ENCODE measurements at regions of chr7 and their contacts with region 1.

Region 1: GRCh38 chr7:32694182-32694581 is 197.4 kb downstream of the KBTBD2 start:
- DNase-seq: no peak
- ATAC-seq: no peak
- H3K4me3 ChIP-seq: no peak overlapping the region
- H3K27ac ChIP-seq: no peak overlapping the region
- H3K4me1 ChIP-seq: 0 out of 2 replicates have a peak, but pooled peaks cover 3% of the 10 kb centered on the region
- H3K27me3 ChIP-seq: no peaks in the 10 kb centered on the region
- CTCF ChIP-seq: no peak
- EP300 ChIP-seq: no peak
- POLR2A ChIP-seq: no peak
- RAD21 ChIP-seq: no peak

Region 2: GRCh38 chr7:32680259-32681173 is 13.7 kb before region 1 on chr7:
- CTCF ChIA-PET with region 1: no interaction called
- POLR2A ChIA-PET with region 1: no interaction called
- RAD21 ChIA-PET with region 1: no interaction called
- SMC1A ChIA-PET with region 1: no interaction called
- in situ Hi-C with region 1: no loop called
- intact Hi-C with region 1: no loop called
- DNase-seq: no peak
- ATAC-seq: peak; percentile 48
- H3K4me3 ChIP-seq: no peak overlapping the region
- H3K27ac ChIP-seq: no peak overlapping the region
- H3K4me1 ChIP-seq: no peaks in the 10 kb centered on the region
- H3K27me3 ChIP-seq: no peaks in the 10 kb centered on the region
- CTCF ChIP-seq: no peak
- EP300 ChIP-seq: no peak
- POLR2A ChIP-seq: no peak
- RAD21 ChIP-seq: no peak

Region 3: GRCh38 chr7:33050535-33051318 is 356.5 kb after region 1 on chr7:
- CTCF ChIA-PET with region 1: interaction called, 3 read pairs
- POLR2A ChIA-PET with region 1: no interaction called
- RAD21 ChIA-PET with region 1: no interaction called
- SMC1A ChIA-PET with region 1: no interaction called
- in situ Hi-C with region 1: loop called (anchors 10 kb)
- intact Hi-C with region 1: loop called (anchors 5 kb)
- DNase-seq: no peak
- ATAC-seq: peak; percentile 67
- H3K4me3 ChIP-seq: peak overlapping the region; percentile 25; the same call in 1 of the 2 replicates
- H3K27ac ChIP-seq: peak overlapping the region; percentile 56; the same call in 1 of the 2 replicates
- H3K4me1 ChIP-seq: peaks cover 21% of the 10 kb centered on the region
- H3K27me3 ChIP-seq: no peaks in the 10 kb centered on the region
- CTCF ChIP-seq: peak; percentile 50 to 62 (median 58)
- EP300 ChIP-seq: no peak
- POLR2A ChIP-seq: no peak
- RAD21 ChIP-seq: peak; percentile 69